T-cell (primary cell): ENCODE measurements at regions of chr10 and their contacts with region 1.

Region 1: DNA sequence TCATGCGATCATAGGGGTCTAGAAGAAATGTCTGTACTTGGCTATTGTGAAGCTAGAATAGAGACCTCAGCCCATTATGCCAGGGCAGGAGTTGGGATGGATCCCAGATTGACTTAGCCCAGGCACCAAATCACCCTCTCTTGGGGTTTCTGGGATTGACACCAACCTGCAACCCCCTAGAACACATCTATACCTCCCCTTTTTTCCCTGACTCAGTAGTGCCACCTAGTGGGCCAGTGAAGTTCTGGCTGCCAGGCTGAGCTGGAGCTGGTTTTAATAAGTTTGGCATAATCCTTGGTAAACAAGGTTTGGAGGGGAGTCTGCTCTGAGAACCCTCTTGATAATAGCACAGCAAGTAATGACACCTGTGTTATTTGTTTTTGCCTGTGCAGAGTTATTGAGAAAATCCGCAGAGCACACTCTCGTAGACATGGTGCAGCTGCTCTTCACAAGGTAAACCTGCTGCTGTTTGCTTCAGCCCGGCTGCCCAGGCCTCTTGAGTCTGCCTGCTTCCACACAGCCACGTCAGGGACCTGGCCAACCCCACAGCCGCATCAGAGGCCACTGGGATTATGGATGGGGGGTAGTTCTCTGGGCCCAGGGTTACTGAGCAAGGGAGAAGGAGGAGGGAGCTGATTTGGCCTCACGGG is 43.3 kb upstream of the NFKB2 start:
- DNase-seq: peak; percentile 20 to 84 (median 62)
- ATAC-seq: peak; percentile 67 to 70 (median 68)
- H3K4me3 ChIP-seq: no peak overlapping the region
- H3K4me3 Mint-ChIP-seq: no peak overlapping the region
- H3K27ac ChIP-seq: no peak overlapping the region
- H3K27ac Mint-ChIP-seq: no peak overlapping the region
- H3K4me1 ChIP-seq: no peaks in the 10 kb centered on the region
- H3K4me1 Mint-ChIP-seq: no peaks in the 10 kb centered on the region
- H3K27me3 ChIP-seq: no peaks in the 10 kb centered on the region
- H3K27me3 Mint-ChIP-seq: no peaks in the 10 kb centered on the region

Region 2: GRCh38 chr10:102055647-102056419 is 296.4 kb before region 1 on chr10 and contains the start of gene ARMH3:
- CTCF ChIA-PET with region 1: no interaction called
- POLR2A ChIA-PET with region 1: no interaction called
- DNase-seq: peak; percentile 75 to 93 (median 84)
- ATAC-seq: peak; percentile 95 to 97 (median 96)
- H3K4me3 ChIP-seq: peak within 1 kb of the TSS; percentile 84 to 98
- H3K4me3 Mint-ChIP-seq: peak within 1 kb of the TSS; percentile 88 to 96 (median 94)
- H3K27ac ChIP-seq: peak within 1 kb of the TSS; percentile 77
- H3K27ac Mint-ChIP-seq: peak within 1 kb of the TSS; percentile 92 to 96
- H3K4me1 ChIP-seq: peaks cover 17 to 36% of the 10 kb centered on the region in 2 experiments
- H3K4me1 Mint-ChIP-seq: peaks cover 44 to 48% (median 45%) of the 10 kb centered on the region in 3 donors
- H3K27me3 ChIP-seq: no peaks in the 10 kb centered on the region
- H3K27me3 Mint-ChIP-seq: no peaks in the 10 kb centered on the region
- total RNA-seq, gene ARMH3: 26.4 to 30.0 (median 27.2) TPM

Region 3: DNA sequence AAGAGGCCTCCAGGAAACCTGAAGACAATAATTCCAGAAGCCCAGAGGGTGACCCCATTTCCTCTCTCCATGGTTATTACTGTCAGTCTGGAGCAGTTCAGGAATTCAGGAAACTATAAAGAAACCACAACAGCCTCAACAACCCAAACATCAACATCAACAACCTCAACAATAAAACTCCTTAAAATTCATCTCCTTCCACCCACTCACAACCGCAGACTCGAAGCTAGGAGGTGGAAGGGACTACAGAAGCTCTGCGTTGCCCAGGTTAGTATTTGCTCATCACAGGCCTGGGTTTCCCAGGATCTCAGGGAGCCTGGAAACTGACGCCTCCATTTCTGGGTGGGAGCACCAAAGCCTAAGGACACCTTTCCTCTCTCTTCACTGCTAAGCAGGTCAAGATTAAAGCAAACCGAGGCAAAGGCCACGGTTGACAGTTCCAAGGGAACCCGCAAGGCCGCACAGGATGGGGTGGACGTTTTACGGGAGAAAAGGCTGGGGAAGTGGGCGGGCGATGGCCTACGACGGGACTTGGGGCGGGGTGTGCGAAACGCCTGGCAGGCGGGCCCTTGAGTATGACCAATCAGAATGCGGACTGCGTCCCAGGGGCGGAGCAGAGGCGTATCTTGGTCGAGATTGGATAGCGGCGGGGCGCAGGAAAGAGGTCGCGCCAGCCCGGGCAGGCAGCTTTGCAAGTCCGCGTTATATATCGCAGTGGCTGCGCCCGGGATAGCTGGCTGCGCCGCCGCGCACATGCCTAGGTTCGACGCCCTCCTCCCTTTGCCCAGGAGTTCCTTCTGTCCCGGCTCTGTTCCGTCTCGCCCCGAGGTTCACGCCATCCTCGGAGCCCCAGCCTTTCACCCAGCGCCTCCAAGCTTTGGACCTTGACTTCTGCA is 126.3 kb before region 1 on chr10 and contains the start of gene ELOVL3:
- CTCF ChIA-PET with region 1: interaction called, 10 to 102 read pairs
- POLR2A ChIA-PET with region 1: no interaction called
- DNase-seq: peak; percentile 62 to 91 (median 80)
- ATAC-seq: peak; percentile 88 to 94 (median 92)
- H3K4me3 ChIP-seq: peak within 1 kb of the TSS; percentile 17 to 39
- H3K4me3 Mint-ChIP-seq: peak within 1 kb of the TSS; percentile 71 to 75 (median 71)
- H3K27ac ChIP-seq: no peak within 1 kb of the TSS
- H3K27ac Mint-ChIP-seq: peak within 1 kb of the TSS in 1 of 2 donors; percentile 17
- H3K4me1 ChIP-seq: peaks cover 2 to 27% of the 10 kb centered on the region in 2 experiments
- H3K4me1 Mint-ChIP-seq: peaks cover 18 to 25% (median 24%) of the 10 kb centered on the region in 3 donors
- H3K27me3 ChIP-seq: peaks cover 2 to 61% of the 10 kb centered on the region in 2 experiments
- H3K27me3 Mint-ChIP-seq: peaks cover 28 to 49% of the 10 kb centered on the region in 2 donors
- total RNA-seq, gene ELOVL3: not detected

Region 4: DNA sequence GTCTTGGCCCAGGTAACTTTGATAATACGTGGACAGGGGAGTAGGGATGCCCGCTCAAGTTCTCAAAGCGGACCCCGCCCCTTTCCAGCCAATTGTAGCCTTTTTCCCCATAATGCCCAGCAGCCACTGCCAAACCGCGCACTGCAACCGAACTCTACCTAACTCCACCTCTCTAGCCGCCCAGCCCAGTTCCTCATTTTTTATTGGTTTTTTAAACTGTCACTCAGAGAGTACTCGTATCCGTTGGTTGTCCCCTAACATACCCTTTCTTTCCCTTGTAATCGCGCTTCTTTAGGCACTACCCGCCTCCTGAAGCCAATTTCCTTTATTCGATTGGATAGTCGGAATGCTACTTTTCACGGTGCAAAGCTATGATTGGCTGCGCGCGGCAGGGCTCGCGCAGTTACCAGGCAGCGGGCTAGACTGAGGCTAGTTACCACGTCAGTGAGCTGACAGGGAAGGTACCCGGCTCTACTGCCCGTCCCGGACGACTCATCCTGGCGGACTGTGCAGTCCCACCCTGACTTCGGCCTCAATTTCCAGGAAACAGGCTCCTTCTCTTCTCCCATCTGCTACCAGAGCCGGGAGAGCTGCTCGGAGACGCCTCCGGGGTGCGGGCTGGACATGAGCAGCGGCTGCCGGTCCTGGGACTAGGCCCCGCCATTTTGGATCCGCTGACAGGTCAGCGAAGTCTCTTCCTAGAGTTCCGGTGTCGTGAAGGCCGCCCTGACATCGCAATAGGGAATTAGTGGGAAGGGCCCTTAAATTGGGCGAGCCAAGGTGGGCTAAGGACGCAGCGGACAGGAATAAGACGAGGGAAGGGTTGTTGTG is 106.9 kb before region 1 on chr10 and contains the start of gene GBF1:
- CTCF ChIA-PET with region 1: interaction called, 3 to 12 read pairs
- POLR2A ChIA-PET with region 1: no interaction called
- DNase-seq: peak; percentile 63 to 97 (median 87)
- ATAC-seq: peak; percentile 88 to 92 (median 88)
- H3K4me3 ChIP-seq: peak within 1 kb of the TSS; percentile 71 to 93
- H3K4me3 Mint-ChIP-seq: peak within 1 kb of the TSS; percentile 94 to 98 (median 97)
- H3K27ac ChIP-seq: peak within 1 kb of the TSS; percentile 63
- H3K27ac Mint-ChIP-seq: peak within 1 kb of the TSS; percentile 88 to 89
- H3K4me1 ChIP-seq: peaks cover 28 to 44% of the 10 kb centered on the region in 2 experiments
- H3K4me1 Mint-ChIP-seq: peaks cover 53 to 64% (median 54%) of the 10 kb centered on the region in 3 donors
- H3K27me3 ChIP-seq: peaks cover 2 to 29% of the 10 kb centered on the region in 2 experiments
- H3K27me3 Mint-ChIP-seq: peaks cover 15 to 25% of the 10 kb centered on the region in 2 donors
- total RNA-seq, gene GBF1: 37.2 to 41.1 (median 38.7) TPM

Region 5: GRCh38 chr10:102334101-102334500 is 18.1 kb before region 1 on chr10:
- CTCF ChIA-PET with region 1: interaction called in 1 of 2 experiments, 13 read pairs
- POLR2A ChIA-PET with region 1: no interaction called
- DNase-seq: no peak
- ATAC-seq: no peak
- H3K4me3 ChIP-seq: no peak overlapping the region
- H3K4me3 Mint-ChIP-seq: no peak overlapping the region
- H3K27ac ChIP-seq: no peak overlapping the region
- H3K27ac Mint-ChIP-seq: no peak overlapping the region
- H3K4me1 ChIP-seq: no peaks in the 10 kb centered on the region
- H3K4me1 Mint-ChIP-seq: peaks cover 0 to 5% (median 1%) of the 10 kb centered on the region in 3 donors
- H3K27me3 ChIP-seq: no peaks in the 10 kb centered on the region
- H3K27me3 Mint-ChIP-seq: no peaks in the 10 kb centered on the region

Region 6: DNA sequence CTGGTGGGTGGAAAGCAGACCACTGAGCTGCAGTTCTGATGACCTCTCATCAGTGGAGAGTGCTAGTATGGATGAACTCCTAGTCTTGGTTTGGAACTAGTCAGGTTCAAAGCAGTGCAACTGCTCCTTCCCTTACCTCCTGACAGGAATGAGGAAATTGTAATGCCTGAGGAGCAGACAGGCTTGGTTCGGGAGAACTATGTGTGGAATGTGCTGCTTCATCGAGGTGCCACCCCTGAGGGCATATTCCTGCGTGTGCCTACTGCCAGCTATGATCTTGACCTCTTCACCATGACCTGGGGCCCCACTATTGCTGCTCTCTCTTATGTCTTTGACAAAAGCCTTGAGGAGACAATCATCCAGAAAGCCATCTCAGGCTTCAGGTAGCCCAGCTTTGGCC is 15.9 kb after region 1 on chr10:
- CTCF ChIA-PET with region 1: interaction called, 4 to 7 read pairs
- POLR2A ChIA-PET with region 1: interaction called, 3 to 16 read pairs
- DNase-seq: no peak
- ATAC-seq: no peak
- H3K4me3 ChIP-seq: no peak overlapping the region
- H3K4me3 Mint-ChIP-seq: no peak overlapping the region
- H3K27ac ChIP-seq: no peak overlapping the region
- H3K27ac Mint-ChIP-seq: no peak overlapping the region
- H3K4me1 ChIP-seq: no peaks in the 10 kb centered on the region
- H3K4me1 Mint-ChIP-seq: no peaks in the 10 kb centered on the region
- H3K27me3 ChIP-seq: no peaks in the 10 kb centered on the region
- H3K27me3 Mint-ChIP-seq: no peaks in the 10 kb centered on the region